Activated CD4-positive, alpha-beta memory T cell treated with anti-CD3 and anti-CD28 coated beads for 36 hours (primary cell): ENCODE measurements at regions of chr2 and their contacts with region 1.

Region 1: GRCh38 chr2:105114551-105114950 is 76.7 kb downstream of the MRPS9 start:
- DNase-seq: no peak
- H3K4me3 Mint-ChIP-seq: no peak overlapping the region
- H3K27ac Mint-ChIP-seq: no peak overlapping the region
- H3K4me1 Mint-ChIP-seq: no peaks in the 10 kb centered on the region
- H3K27me3 Mint-ChIP-seq: no peaks in the 10 kb centered on the region

Region 2: GRCh38 chr2:105085525-105085924 is 29.0 kb before region 1 on chr2:
- CTCF ChIA-PET with region 1: no interaction called
- POLR2A ChIA-PET with region 1: no interaction called
- intact Hi-C with region 1: no loop called
- DNase-seq: no peak
- H3K4me3 Mint-ChIP-seq: no peak overlapping the region
- H3K27ac Mint-ChIP-seq: no peak overlapping the region
- H3K4me1 Mint-ChIP-seq: peaks cover 9% of the 10 kb centered on the region
- H3K27me3 Mint-ChIP-seq: no peaks in the 10 kb centered on the region

Region 3: DNA sequence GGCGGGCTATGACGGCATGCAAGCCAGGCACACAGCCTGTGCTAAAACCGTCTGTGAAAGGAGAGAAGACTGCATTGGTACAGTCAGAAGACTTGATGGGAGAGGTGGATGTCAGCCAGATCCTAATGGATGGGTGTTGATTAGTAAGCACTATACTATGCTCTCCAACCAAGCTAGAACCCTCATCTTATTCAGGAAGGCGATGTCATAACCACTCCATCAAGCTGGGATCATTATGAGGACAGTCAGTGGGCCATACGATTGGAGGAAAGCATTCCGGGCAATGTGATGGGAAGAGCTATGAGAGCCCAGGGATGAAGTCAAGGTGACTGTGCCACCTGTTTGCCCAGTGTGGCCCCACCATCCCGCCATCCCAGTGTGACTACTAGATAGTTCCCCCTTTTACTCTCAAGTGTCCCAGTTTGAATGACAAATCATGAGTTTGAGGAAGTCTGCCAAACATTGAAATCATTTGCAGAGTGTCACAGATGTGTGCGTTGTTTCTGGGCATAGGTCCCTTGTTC is 10.3 kb before region 1 on chr2:
- CTCF ChIA-PET with region 1: interaction called, 15 read pairs
- POLR2A ChIA-PET with region 1: no interaction called
- intact Hi-C with region 1: no loop called
- DNase-seq: no peak
- H3K4me3 Mint-ChIP-seq: no peak overlapping the region
- H3K27ac Mint-ChIP-seq: no peak overlapping the region
- H3K4me1 Mint-ChIP-seq: no peaks in the 10 kb centered on the region
- H3K27me3 Mint-ChIP-seq: no peaks in the 10 kb centered on the region

Region 4: DNA sequence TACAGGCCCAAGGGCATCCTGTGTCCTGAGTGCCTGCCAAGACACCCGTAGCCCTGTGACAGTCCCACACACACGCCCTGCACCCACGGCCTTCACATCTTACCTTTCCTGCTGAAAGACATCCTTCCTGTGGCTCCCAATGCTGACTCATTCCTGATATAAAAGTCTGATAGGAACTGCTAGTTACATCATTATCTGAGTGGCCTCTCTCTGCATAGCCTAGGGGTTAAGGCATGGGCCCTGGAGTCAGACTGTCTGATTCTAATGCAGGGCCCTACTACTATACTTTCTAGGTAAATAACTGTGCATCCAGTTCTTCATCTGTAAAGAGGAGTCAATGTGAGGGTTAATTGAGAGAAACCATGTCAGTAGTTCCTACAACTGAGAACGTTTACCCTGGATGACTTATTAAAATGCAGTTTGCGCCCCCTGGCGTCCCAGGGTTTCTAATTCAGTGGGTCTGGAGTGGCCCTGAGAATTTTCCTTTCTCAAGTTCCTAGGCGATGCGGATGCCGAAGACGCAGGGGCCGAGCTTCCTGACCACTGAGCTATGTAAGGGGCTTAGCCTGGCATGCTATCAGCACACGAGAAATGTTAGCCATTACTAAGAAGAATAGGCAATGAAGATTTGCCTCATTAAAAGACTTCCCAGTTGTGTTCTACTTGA is 121.0 kb after region 1 on chr2:
- CTCF ChIA-PET with region 1: interaction called, 222 read pairs
- POLR2A ChIA-PET with region 1: interaction called, 4 read pairs
- intact Hi-C with region 1: loop called (anchors 1 kb)
- DNase-seq: peak; percentile 77
- H3K4me3 Mint-ChIP-seq: no peak overlapping the region
- H3K27ac Mint-ChIP-seq: no peak overlapping the region
- H3K4me1 Mint-ChIP-seq: peaks cover 13% of the 10 kb centered on the region
- H3K27me3 Mint-ChIP-seq: peaks cover 11% of the 10 kb centered on the region

Region 5: GRCh38 chr2:105294844-105295481 is 180.4 kb after region 1 on chr2:
- CTCF ChIA-PET with region 1: interaction called, 3 read pairs
- POLR2A ChIA-PET with region 1: no interaction called
- intact Hi-C with region 1: loop called (anchors 1 kb)
- DNase-seq: peak; percentile 26
- H3K4me3 Mint-ChIP-seq: no peak overlapping the region
- H3K27ac Mint-ChIP-seq: no peak overlapping the region
- H3K4me1 Mint-ChIP-seq: no peaks in the 10 kb centered on the region
- H3K27me3 Mint-ChIP-seq: no peaks in the 10 kb centered on the region

Region 6: DNA sequence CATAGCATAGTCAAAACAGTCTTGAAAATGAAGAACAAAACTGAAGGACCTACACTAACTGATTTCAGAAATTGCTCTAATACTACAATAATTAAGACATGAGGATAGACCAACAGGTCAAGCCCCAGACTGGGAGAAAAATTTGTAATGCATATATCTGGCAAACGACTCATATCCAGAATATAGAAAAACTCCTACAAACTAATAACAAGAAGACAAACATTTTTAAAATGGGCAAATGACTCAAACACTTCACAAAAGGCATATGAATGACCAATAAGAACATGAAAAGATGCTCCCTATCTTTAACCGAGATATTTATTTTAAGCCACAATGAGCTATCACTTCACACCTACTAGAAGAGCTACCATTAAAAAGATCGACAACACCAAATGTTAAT is 200.8 kb after region 1 on chr2:
- CTCF ChIA-PET with region 1: no interaction called
- POLR2A ChIA-PET with region 1: no interaction called
- intact Hi-C with region 1: no loop called
- DNase-seq: no peak
- H3K4me3 Mint-ChIP-seq: no peak overlapping the region
- H3K27ac Mint-ChIP-seq: no peak overlapping the region
- H3K4me1 Mint-ChIP-seq: peaks cover 19% of the 10 kb centered on the region
- H3K27me3 Mint-ChIP-seq: no peaks in the 10 kb centered on the region

Region 7: GRCh38 chr2:105627534-105627933 is 513.0 kb after region 1 on chr2:
- CTCF ChIA-PET with region 1: no interaction called
- POLR2A ChIA-PET with region 1: no interaction called
- intact Hi-C with region 1: no loop called
- DNase-seq: no peak
- H3K4me3 Mint-ChIP-seq: no peak overlapping the region
- H3K27ac Mint-ChIP-seq: no peak overlapping the region
- H3K4me1 Mint-ChIP-seq: no peaks in the 10 kb centered on the region
- H3K27me3 Mint-ChIP-seq: peaks cover 5% of the 10 kb centered on the region